CD14-positive monocyte (primary cell): ENCODE measurements at regions of chr5 and their contacts with region 1.

Region 1: GRCh38 chr5:141923448-141924352 is at the start of gene DELE1:
- DNase-seq: peak; percentile 88 to 92 (median 90)
- H3K4me3 ChIP-seq: peak within 1 kb of the TSS; percentile 69 to 82 (median 80)
- H3K4me3 Mint-ChIP-seq: peak within 1 kb of the TSS; percentile 84 to 96
- H3K27ac ChIP-seq: peak within 1 kb of the TSS; percentile 95 to 98
- H3K27ac Mint-ChIP-seq: peak within 1 kb of the TSS; percentile 97 to 100 (median 98)
- H3K4me1 ChIP-seq: peaks cover 13 to 15% of the 10 kb centered on the region in 2 donors
- H3K4me1 Mint-ChIP-seq: peaks cover 19% of the 10 kb centered on the region
- H3K27me3 ChIP-seq: no peaks in the 10 kb centered on the region
- H3K27me3 Mint-ChIP-seq: no peaks in the 10 kb centered on the region
- CTCF ChIP-seq: no peak
- polyA plus RNA-seq, gene DELE1: 47.3 to 140 (median 49.6) TPM

Region 2: GRCh38 chr5:141849375-141850243 is 74.1 kb before region 1 on chr5:
- intact Hi-C with region 1: no loop called
- DNase-seq: peak; percentile 32 to 51 (median 42)
- H3K4me3 ChIP-seq: peak overlapping the region; percentile 72 to 86 (median 80)
- H3K4me3 Mint-ChIP-seq: peak overlapping the region; percentile 88 to 91
- H3K27ac ChIP-seq: peak overlapping the region; percentile 55 to 78
- H3K27ac Mint-ChIP-seq: peak overlapping the region; percentile 43 to 73 (median 67)
- H3K4me1 ChIP-seq: peaks cover 10 to 13% of the 10 kb centered on the region in 2 donors
- H3K4me1 Mint-ChIP-seq: peaks cover 21% of the 10 kb centered on the region
- H3K27me3 ChIP-seq: peaks cover 6 to 16% of the 10 kb centered on the region in 2 donors
- H3K27me3 Mint-ChIP-seq: peaks cover 17 to 43% (median 25%) of the 10 kb centered on the region in 3 donors
- CTCF ChIP-seq: no peak

Region 3: DNA sequence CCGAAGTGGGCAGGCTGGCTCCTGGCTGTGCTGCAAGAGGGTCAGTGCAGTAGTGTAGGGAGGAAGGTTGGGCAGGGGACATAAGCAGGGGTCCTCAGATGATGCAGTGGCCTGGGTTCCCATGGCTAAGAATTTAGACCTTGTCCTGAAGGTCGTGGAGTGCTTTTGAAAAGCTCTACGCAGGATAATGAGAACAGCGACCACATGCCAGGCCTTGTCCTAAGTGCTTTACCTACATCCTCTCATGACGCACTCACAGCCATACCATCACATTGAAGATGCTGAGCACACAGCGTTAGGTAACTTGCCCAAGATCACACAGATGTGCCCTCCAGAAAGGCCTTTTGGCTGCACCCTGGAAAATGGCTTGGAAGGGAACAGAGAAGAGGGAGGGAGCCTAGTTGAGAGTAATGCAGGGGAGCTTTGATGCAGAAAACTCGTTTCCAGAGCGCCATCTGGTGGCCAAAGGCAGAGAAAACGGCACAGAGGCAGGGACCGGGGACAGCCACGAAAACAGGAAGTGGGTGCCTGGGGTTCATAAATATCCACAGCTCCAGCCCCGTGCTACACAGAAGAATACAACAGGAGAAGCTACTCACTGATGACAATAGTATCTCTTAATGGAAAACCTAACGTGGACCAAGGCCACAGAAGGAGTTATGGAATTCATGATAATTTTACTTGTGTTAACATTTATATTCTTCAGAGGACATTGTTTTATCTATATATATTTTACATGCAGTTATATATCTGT is 36.9 kb after region 1 on chr5:
- intact Hi-C with region 1: loop called in 1 of 2 experiments (anchors 5 kb)
- DNase-seq: peak; percentile 88 to 90 (median 89)
- H3K4me3 ChIP-seq: no peak overlapping the region
- H3K4me3 Mint-ChIP-seq: no peak overlapping the region
- H3K27ac ChIP-seq: no peak overlapping the region
- H3K27ac Mint-ChIP-seq: peak overlapping the region in 3 of 7 donors; percentile 4 to 85 (median 44)
- H3K4me1 ChIP-seq: peaks cover 28 to 42% of the 10 kb centered on the region in 2 donors
- H3K4me1 Mint-ChIP-seq: peaks cover 43% of the 10 kb centered on the region
- H3K27me3 ChIP-seq: no peaks in the 10 kb centered on the region
- H3K27me3 Mint-ChIP-seq: peaks cover 2 to 7% (median 4%) of the 10 kb centered on the region in 3 donors
- CTCF ChIP-seq: peak; percentile 90

Region 4: DNA sequence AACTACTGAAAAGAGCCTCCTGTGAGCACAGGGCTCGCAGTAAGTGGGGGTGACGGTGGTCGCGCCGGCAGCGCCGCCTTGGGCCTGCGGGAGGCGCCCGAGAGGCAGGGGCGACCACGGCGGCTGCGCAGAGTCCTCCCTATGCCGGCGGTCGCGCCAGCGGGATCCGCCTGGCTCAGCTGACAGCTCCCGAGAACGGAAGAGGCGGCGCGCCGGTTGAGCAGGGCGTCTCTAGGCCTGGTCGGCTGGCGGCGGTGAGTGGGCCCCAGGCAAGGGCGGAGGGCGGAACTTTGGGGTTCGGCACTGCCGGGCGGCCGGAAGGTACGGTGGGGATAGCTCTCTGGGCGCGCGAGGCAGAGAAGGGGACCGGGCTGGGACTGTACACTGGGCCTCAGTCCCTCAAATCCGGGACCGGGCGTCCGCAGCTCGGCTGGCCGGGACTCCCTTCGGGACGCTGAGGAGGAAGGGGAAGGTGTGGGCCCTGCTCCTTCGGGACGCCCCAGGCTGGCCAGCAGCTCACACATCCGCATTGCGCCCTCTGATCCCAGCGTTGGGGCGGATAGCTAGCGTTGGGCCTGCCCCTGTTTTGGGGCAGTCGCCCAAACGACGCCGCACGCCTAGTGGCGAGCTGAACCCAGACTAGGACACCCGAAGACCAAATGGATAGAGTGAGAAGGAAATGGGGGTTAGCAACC is 45.4 kb after region 1 on chr5 and contains the start of gene RNF14:
- intact Hi-C with region 1: loop called in 1 of 2 experiments (anchors 2 kb)
- DNase-seq: peak; percentile 89 to 94 (median 94)
- H3K4me3 ChIP-seq: peak within 1 kb of the TSS; percentile 45 to 93 (median 90)
- H3K4me3 Mint-ChIP-seq: peak within 1 kb of the TSS; percentile 85 to 93
- H3K27ac ChIP-seq: peak within 1 kb of the TSS; percentile 97 to 100
- H3K27ac Mint-ChIP-seq: peak within 1 kb of the TSS; percentile 96 to 98 (median 97)
- H3K4me1 ChIP-seq: peaks cover 22 to 26% of the 10 kb centered on the region in 2 donors
- H3K4me1 Mint-ChIP-seq: peaks cover 21% of the 10 kb centered on the region
- H3K27me3 ChIP-seq: no peaks in the 10 kb centered on the region
- H3K27me3 Mint-ChIP-seq: peaks cover 0 to 2% (median 2%) of the 10 kb centered on the region in 3 donors
- CTCF ChIP-seq: peak; percentile 100
- polyA plus RNA-seq, gene RNF14: 9.7 to 52.8 (median 31.2) TPM